B cell (primary cell): ENCODE measurements at regions of chr6 and their contacts with region 1.

Region 1: GRCh38 chr6:106512048-106512967 is 117.0 kb downstream of the RTN4IP1 start:
- DNase-seq: peak; percentile 89
- ATAC-seq: peak; percentile 69
- H3K4me3 ChIP-seq: peak overlapping the region; percentile 84 to 96 (median 91)
- H3K4me3 Mint-ChIP-seq: peak overlapping the region; percentile 98
- H3K27ac ChIP-seq: peak overlapping the region; percentile 91 to 95
- H3K27ac Mint-ChIP-seq: peak overlapping the region; percentile 97
- H3K4me1 ChIP-seq: peaks cover 46 to 50% of the 10 kb centered on the region in 2 donors
- H3K4me1 Mint-ChIP-seq: peaks cover 57% of the 10 kb centered on the region
- H3K27me3 ChIP-seq: no peaks in the 10 kb centered on the region
- H3K27me3 Mint-ChIP-seq: no peaks in the 10 kb centered on the region
- CTCF ChIP-seq: peak; percentile 66

Region 2: GRCh38 chr6:106325336-106326178 is 186.8 kb before region 1 on chr6 and contains the start of gene ATG5:
- CTCF ChIA-PET with region 1: no interaction called
- POLR2A ChIA-PET with region 1: no interaction called
- intact Hi-C with region 1: loop called (anchors 2 kb)
- DNase-seq: peak; percentile 99
- ATAC-seq: peak; percentile 92
- H3K4me3 ChIP-seq: peak within 1 kb of the TSS; percentile 87 to 99 (median 94)
- H3K4me3 Mint-ChIP-seq: peak within 1 kb of the TSS; percentile 100
- H3K27ac ChIP-seq: peak within 1 kb of the TSS; percentile 89 to 91
- H3K27ac Mint-ChIP-seq: peak within 1 kb of the TSS; percentile 98
- H3K4me1 ChIP-seq: peaks cover 16 to 20% of the 10 kb centered on the region in 2 donors
- H3K4me1 Mint-ChIP-seq: peaks cover 44% of the 10 kb centered on the region
- H3K27me3 ChIP-seq: peaks cover 0 to 6% (median 4%) of the 10 kb centered on the region in 4 experiments
- H3K27me3 Mint-ChIP-seq: peaks cover 27% of the 10 kb centered on the region
- CTCF ChIP-seq: no peak
- total RNA-seq, gene ATG5: 26.3 and 34.0 TPM in 2 replicates

Region 3: GRCh38 chr6:106525111-106525881 is 13.0 kb after region 1 on chr6:
- CTCF ChIA-PET with region 1: interaction called, 78 read pairs
- POLR2A ChIA-PET with region 1: interaction called, 29 read pairs
- intact Hi-C with region 1: loop called (anchors 1 kb)
- DNase-seq: peak; percentile 74
- ATAC-seq: peak; percentile 29
- H3K4me3 ChIP-seq: peak overlapping the region; percentile 11 to 83 (median 45)
- H3K4me3 Mint-ChIP-seq: peak overlapping the region; percentile 83
- H3K27ac ChIP-seq: peak overlapping the region; percentile 75 to 81
- H3K27ac Mint-ChIP-seq: peak overlapping the region; percentile 85
- H3K4me1 ChIP-seq: peaks cover 51 to 70% of the 10 kb centered on the region in 2 donors
- H3K4me1 Mint-ChIP-seq: peaks cover 74% of the 10 kb centered on the region
- H3K27me3 ChIP-seq: no peaks in the 10 kb centered on the region
- H3K27me3 Mint-ChIP-seq: no peaks in the 10 kb centered on the region
- CTCF ChIP-seq: no peak

Region 4: GRCh38 chr6:106539936-106540335 is 27.6 kb after region 1 on chr6:
- CTCF ChIA-PET with region 1: interaction called, 35 read pairs
- POLR2A ChIA-PET with region 1: interaction called, 9 read pairs
- intact Hi-C with region 1: no loop called
- DNase-seq: no peak
- ATAC-seq: no peak
- H3K4me3 ChIP-seq: no peak overlapping the region
- H3K4me3 Mint-ChIP-seq: peak overlapping the region; percentile 20
- H3K27ac ChIP-seq: peak overlapping the region in 1 of 2 donors; percentile 48
- H3K27ac Mint-ChIP-seq: peak overlapping the region; percentile 82
- H3K4me1 ChIP-seq: peaks cover 37% of the 10 kb centered on the region in 2 donors
- H3K4me1 Mint-ChIP-seq: peaks cover 55% of the 10 kb centered on the region
- H3K27me3 ChIP-seq: no peaks in the 10 kb centered on the region
- H3K27me3 Mint-ChIP-seq: no peaks in the 10 kb centered on the region
- CTCF ChIP-seq: no peak

Region 5: GRCh38 chr6:106556368-106556960 is 44.2 kb after region 1 on chr6:
- CTCF ChIA-PET with region 1: interaction called, 156 read pairs
- POLR2A ChIA-PET with region 1: interaction called, 3 read pairs
- intact Hi-C with region 1: loop called (anchors 1 kb)
- DNase-seq: peak; percentile 58
- ATAC-seq: peak; percentile 57
- H3K4me3 ChIP-seq: no peak overlapping the region
- H3K4me3 Mint-ChIP-seq: no peak overlapping the region
- H3K27ac ChIP-seq: no peak overlapping the region
- H3K27ac Mint-ChIP-seq: no peak overlapping the region
- H3K4me1 ChIP-seq: peaks cover 4% of the 10 kb centered on the region in 2 donors
- H3K4me1 Mint-ChIP-seq: peaks cover 16% of the 10 kb centered on the region
- H3K27me3 ChIP-seq: no peaks in the 10 kb centered on the region
- H3K27me3 Mint-ChIP-seq: no peaks in the 10 kb centered on the region
- CTCF ChIP-seq: peak; percentile 78

Region 6: GRCh38 chr6:106629103-106629858 is 117.0 kb after region 1 on chr6 and contains the starts of genes QRSL1 and RTN4IP1:
- CTCF ChIA-PET with region 1: no interaction called
- POLR2A ChIA-PET with region 1: no interaction called
- intact Hi-C with region 1: loop called (anchors 5 kb)
- DNase-seq: peak; percentile 96
- ATAC-seq: peak; percentile 83
- H3K4me3 ChIP-seq: peak within 1 kb of the TSS; percentile 67 to 98 (median 94)
- H3K4me3 Mint-ChIP-seq: peak within 1 kb of the TSS; percentile 98
- H3K27ac ChIP-seq: peak within 1 kb of the TSS; percentile 87 to 97
- H3K27ac Mint-ChIP-seq: peak within 1 kb of the TSS; percentile 98
- H3K4me1 ChIP-seq: peaks cover 43 to 50% of the 10 kb centered on the region in 2 donors
- H3K4me1 Mint-ChIP-seq: peaks cover 64% of the 10 kb centered on the region
- H3K27me3 ChIP-seq: no peaks in the 10 kb centered on the region
- H3K27me3 Mint-ChIP-seq: no peaks in the 10 kb centered on the region
- CTCF ChIP-seq: no peak
- total RNA-seq, gene QRSL1: 38.5 and 42.1 TPM in 2 replicates
- total RNA-seq, gene RTN4IP1: 12.1 and 13.3 TPM in 2 replicates

Region 7: GRCh38 chr6:106757267-106757666 is 245.0 kb after region 1 on chr6:
- CTCF ChIA-PET with region 1: no interaction called
- POLR2A ChIA-PET with region 1: no interaction called
- intact Hi-C with region 1: no loop called
- DNase-seq: no peak
- ATAC-seq: no peak
- H3K4me3 ChIP-seq: no peak overlapping the region
- H3K4me3 Mint-ChIP-seq: no peak overlapping the region
- H3K27ac ChIP-seq: no peak overlapping the region
- H3K27ac Mint-ChIP-seq: no peak overlapping the region
- H3K4me1 ChIP-seq: no peaks in the 10 kb centered on the region
- H3K4me1 Mint-ChIP-seq: no peaks in the 10 kb centered on the region
- H3K27me3 ChIP-seq: no peaks in the 10 kb centered on the region
- H3K27me3 Mint-ChIP-seq: no peaks in the 10 kb centered on the region
- CTCF ChIP-seq: no peak

Region 8: GRCh38 chr6:107560657-107561056 is 1048.3 kb after region 1 on chr6:
- CTCF ChIA-PET with region 1: no interaction called
- POLR2A ChIA-PET with region 1: no interaction called
- intact Hi-C with region 1: no loop called
- DNase-seq: no peak
- ATAC-seq: no peak
- H3K4me3 ChIP-seq: no peak overlapping the region
- H3K4me3 Mint-ChIP-seq: no peak overlapping the region
- H3K27ac ChIP-seq: no peak overlapping the region
- H3K27ac Mint-ChIP-seq: no peak overlapping the region
- H3K4me1 ChIP-seq: peaks cover 0 to 4% of the 10 kb centered on the region in 2 donors
- H3K4me1 Mint-ChIP-seq: peaks cover 6% of the 10 kb centered on the region
- H3K27me3 ChIP-seq: no peaks in the 10 kb centered on the region
- H3K27me3 Mint-ChIP-seq: peaks cover 5% of the 10 kb centered on the region
- CTCF ChIP-seq: no peak